ENCODE measurements at regions of chr11 and their contacts with region 1.

Region 1: GRCh38 chr11:104164028-104164520 is at the start of gene PDGFD:
- DNase-seq: peak; percentile 22
- H3K4me3 ChIP-seq: peak within 1 kb of the TSS in 3 of 4 donors; percentile 31 to 49 (median 32)
- H3K27ac ChIP-seq: peak within 1 kb of the TSS in 2 of 4 donors; percentile 7 to 23
- H3K4me1 ChIP-seq: peaks cover 0 to 16% (median 9%) of the 10 kb centered on the region in 4 donors
- H3K27me3 ChIP-seq: peaks cover 16% of the 10 kb centered on the region
- CTCF ChIP-seq: peak in 2 of 5 experiments; percentile 11 to 17
- EP300 ChIP-seq: no peak
- POLR2A ChIP-seq: no peak
- total RNA-seq, gene PDGFD: 2.3 to 6.0 (median 3.8) TPM in 3 of 4 donors, not detected in the other

Region 2: DNA sequence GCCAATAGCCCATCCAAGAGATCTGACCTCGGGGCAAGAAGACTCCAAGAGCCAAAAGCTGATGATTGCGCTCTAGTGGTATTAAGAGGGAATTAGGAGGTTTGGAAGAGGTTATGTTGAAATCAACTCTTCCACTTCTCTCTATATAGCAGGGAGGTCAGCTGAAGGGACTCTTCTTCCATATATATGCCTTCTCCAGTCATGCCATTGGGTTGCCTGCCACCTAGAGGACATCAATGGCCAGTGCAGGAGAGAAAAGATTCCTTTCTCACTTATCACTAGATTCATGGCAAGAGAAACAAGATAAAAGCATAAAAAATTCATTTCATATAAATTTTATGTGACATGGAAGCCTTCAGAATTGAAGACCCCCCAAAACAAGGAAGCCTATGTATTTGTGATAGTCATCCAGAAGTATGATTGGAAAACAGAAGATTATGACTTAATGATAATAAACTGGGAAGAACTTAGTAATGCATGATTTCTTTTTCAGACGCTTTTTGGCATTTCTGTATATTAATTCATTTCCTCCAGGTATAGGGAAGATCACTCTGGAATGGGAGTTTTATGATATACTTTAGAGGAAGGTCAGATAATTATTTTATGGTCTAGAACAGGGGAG is 562.7 kb before region 1 on chr11:
- in situ Hi-C with region 1: no loop called
- intact Hi-C with region 1: no loop called
- DNase-seq: no peak
- H3K4me3 ChIP-seq: no peak overlapping the region
- H3K27ac ChIP-seq: no peak overlapping the region
- H3K4me1 ChIP-seq: no peaks in the 10 kb centered on the region
- H3K27me3 ChIP-seq: no peaks in the 10 kb centered on the region
- CTCF ChIP-seq: peak; percentile 45 to 77 (median 54)
- EP300 ChIP-seq: no peak
- POLR2A ChIP-seq: no peak

Region 3: DNA sequence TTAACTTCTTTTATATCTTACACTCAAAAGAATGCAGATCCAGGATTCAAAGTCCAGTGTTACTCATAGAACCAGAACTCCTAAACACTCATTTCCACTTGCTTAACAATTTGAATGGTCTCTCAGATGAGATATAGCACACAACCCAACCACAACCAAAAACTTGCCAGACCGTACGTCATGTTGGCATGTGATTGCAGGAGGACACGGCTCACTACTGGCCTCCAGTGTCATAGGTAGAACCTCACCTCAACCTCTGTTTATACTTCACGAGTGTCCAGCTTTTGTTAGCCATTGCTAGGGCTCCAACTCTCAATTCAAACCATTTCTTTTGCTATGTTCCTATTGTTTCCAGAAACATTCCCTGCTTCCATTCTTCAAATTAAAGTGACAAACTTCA is 58.4 kb after region 1 on chr11:
- in situ Hi-C with region 1: loop called in 1 of 4 experiments (anchors 10 kb)
- intact Hi-C with region 1: no loop called
- DNase-seq: no peak
- H3K4me3 ChIP-seq: no peak overlapping the region
- H3K27ac ChIP-seq: no peak overlapping the region
- H3K4me1 ChIP-seq: no peaks in the 10 kb centered on the region
- H3K27me3 ChIP-seq: no peaks in the 10 kb centered on the region
- CTCF ChIP-seq: no peak
- EP300 ChIP-seq: no peak
- POLR2A ChIP-seq: no peak

Region 4: GRCh38 chr11:104380358-104380757 is 216.3 kb after region 1 on chr11:
- in situ Hi-C with region 1: no loop called
- intact Hi-C with region 1: no loop called
- DNase-seq: no peak
- H3K4me3 ChIP-seq: no peak overlapping the region
- H3K27ac ChIP-seq: no peak overlapping the region
- H3K4me1 ChIP-seq: no peaks in the 10 kb centered on the region
- H3K27me3 ChIP-seq: no peaks in the 10 kb centered on the region
- CTCF ChIP-seq: no peak
- EP300 ChIP-seq: no peak
- POLR2A ChIP-seq: no peak

Measured in transverse colon (tissue), 4 donors.